PC-3 (cell line): ENCODE measurements at regions of chr15 and their contacts with region 1.

Region 1: DNA sequence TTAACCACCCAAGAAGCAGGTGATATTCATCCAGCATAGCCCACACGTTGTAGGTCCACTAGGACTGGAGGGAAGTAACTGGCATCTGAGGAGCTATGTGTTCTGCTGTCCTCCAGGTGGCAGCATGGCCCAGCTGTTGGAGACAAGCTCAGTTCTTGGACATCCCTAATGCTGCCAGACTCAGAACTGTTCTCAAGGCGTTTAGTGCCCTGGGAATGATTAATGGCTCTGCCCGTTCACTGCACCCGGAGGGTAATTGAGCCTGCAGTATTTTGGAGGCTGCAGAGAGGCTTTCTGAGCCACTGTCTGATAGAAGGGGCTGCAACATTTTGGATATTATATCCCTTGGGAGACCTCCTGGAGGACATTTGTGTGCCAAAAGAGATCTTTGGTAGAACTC is 521.2 kb upstream of the SEMA6D start:
- DNase-seq: peak; percentile 80
- ATAC-seq: peak; percentile 97
- H3K4me3 ChIP-seq: no peak overlapping the region
- H3K27ac ChIP-seq: no peak overlapping the region
- H3K4me1 ChIP-seq: no peaks in the 10 kb centered on the region
- H3K27me3 ChIP-seq: no peaks in the 10 kb centered on the region
- CTCF ChIP-seq: peak; percentile 73

Region 2: GRCh38 chr15:47266546-47266945 is 70.5 kb after region 1 on chr15:
- CTCF ChIA-PET with region 1: no interaction called
- POLR2A ChIA-PET with region 1: no interaction called
- intact Hi-C with region 1: no loop called
- DNase-seq: no peak
- ATAC-seq: no peak
- H3K4me3 ChIP-seq: no peak overlapping the region
- H3K27ac ChIP-seq: no peak overlapping the region
- H3K4me1 ChIP-seq: no peaks in the 10 kb centered on the region
- H3K27me3 ChIP-seq: no peaks in the 10 kb centered on the region
- CTCF ChIP-seq: no peak

Region 3: DNA sequence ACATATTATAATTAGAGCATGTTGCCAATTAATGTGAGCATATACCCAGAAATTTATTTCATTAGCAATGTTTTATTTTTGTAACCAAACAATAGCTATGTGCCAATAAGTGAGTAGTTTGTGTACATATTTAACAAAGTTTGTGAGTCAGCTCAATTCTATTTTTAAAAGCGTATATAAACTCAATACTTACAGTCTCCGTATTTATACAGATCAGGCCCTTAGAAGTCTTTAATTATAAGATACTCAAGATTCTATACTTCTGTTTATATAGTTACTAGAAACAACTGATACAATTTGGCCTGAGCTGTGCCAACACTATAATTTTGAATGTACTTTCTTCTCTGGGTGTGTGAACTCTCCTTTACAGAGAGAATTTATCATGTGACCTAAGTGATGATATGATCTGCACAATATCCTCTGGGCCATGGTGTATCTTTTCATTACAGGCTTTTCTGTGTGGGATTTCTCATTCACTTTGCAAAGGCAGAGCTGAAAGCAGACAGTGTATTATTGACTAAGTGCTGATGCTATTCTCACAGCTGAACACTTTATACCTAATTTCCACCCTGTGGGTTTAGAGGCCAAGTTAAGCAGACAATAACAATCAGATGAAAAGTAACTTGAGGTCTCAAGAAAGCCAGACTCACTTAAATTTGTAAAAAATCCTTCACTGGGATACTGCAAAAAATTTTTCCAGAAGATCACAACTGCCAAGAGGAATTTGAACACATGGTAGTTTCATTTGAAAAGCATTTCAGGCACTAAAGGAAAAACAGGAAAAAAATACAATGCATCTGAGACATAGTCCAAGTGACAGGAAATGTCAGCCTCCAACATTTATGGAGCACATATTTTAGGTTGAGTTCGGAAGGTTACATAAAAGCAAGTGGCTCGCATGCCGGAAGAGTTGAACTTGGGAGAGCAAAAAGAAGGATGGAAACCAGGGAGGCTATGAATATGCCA is 243.4 kb after region 1 on chr15:
- CTCF ChIA-PET with region 1: no interaction called
- POLR2A ChIA-PET with region 1: no interaction called
- intact Hi-C with region 1: loop called (anchors 5 kb)
- DNase-seq: peak; percentile 70
- ATAC-seq: peak; percentile 73
- H3K4me3 ChIP-seq: peak overlapping the region; percentile 29; the same call in 1 of the 2 replicates
- H3K27ac ChIP-seq: peak overlapping the region; percentile 90
- H3K4me1 ChIP-seq: peaks cover 51% of the 10 kb centered on the region
- H3K27me3 ChIP-seq: no peaks in the 10 kb centered on the region
- CTCF ChIP-seq: no peak

Region 4: DNA sequence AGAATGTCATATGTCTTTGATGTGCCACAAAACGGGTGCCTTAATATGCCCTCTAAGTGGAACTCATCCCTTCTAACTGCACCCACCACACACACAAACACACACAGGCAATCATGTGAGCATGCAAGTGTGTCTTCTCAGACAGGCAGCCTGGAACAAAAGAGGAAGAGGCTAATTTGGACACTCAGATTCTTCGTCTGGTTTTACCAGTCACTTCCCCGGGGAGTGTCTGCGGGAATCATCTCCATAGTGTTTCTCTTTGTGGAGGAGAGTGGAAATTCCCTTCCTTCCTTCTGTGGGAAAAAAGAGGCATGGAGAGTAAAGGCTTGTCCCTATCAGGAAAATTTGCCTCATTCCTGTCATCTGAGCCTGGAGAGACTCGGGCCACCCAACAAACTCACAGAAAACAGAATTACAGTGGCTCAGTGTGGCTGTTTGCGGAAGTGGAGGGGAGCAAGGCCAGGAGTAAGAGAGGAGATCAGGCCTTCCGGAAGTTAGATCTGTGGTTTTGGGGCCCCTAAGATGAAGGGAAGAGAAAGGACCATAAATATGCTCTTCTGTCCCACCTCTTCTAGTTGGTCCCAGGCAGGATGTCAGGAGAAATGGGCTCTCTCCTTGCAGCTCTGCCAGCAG is 308.7 kb after region 1 on chr15:
- CTCF ChIA-PET with region 1: interaction called, 7 read pairs
- POLR2A ChIA-PET with region 1: no interaction called
- intact Hi-C with region 1: loop called (anchors 1 kb)
- DNase-seq: no peak
- ATAC-seq: no peak
- H3K4me3 ChIP-seq: no peak overlapping the region
- H3K27ac ChIP-seq: no peak overlapping the region
- H3K4me1 ChIP-seq: no peaks in the 10 kb centered on the region
- H3K27me3 ChIP-seq: no peaks in the 10 kb centered on the region
- CTCF ChIP-seq: no peak

Region 5: GRCh38 chr15:47987908-47988532 is 792.0 kb after region 1 on chr15:
- CTCF ChIA-PET with region 1: interaction called, 29 read pairs
- POLR2A ChIA-PET with region 1: no interaction called
- intact Hi-C with region 1: loop called (anchors 1 kb)
- DNase-seq: peak; percentile 60
- ATAC-seq: peak; percentile 90
- H3K4me3 ChIP-seq: no peak overlapping the region
- H3K27ac ChIP-seq: no peak overlapping the region
- H3K4me1 ChIP-seq: no peaks in the 10 kb centered on the region
- H3K27me3 ChIP-seq: no peaks in the 10 kb centered on the region
- CTCF ChIP-seq: peak; percentile 70

Region 6: DNA sequence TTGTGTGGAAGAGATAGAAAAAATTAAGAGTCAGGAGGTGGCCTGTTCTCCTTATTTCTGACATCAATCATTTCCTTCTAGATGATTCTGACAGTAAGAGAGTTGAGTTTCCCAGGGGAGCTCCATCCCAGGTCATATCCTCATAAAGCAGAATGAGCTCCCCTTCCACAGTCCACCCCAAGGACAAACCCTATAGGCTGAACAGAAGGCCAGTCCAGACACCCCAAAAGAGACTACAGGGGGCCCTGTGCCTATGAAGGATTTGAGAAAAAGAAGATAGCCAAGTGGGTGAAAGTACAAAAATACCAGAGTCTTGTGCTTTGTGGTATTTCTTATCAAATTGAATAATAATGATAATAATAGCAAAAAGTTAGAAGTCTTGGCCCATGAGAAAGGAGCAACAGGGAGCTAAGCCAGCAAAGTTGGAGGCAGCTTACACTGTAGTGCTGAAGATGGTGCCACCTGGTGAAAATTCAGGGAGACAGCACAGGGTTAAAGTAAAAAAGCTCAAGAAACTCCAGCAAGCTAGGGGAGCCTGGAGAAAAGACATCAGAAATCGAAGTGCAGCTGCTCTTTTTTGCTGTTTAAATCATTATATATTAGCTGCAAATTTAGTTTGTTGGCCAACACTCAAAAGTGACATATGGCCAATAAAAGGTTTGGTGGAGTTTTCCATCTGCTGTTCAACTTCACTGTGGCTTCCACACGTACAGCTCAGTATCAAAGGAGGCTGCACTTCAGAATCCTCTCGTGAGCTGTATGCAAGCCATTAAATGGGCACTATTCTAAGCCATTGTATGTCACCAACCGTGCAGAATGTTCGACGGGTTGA is 888.9 kb after region 1 on chr15:
- CTCF ChIA-PET with region 1: interaction called, 11 read pairs
- POLR2A ChIA-PET with region 1: no interaction called
- intact Hi-C with region 1: loop called (anchors 2 kb)
- DNase-seq: peak; percentile 37
- ATAC-seq: peak; percentile 63
- H3K4me3 ChIP-seq: no peak overlapping the region
- H3K27ac ChIP-seq: no peak overlapping the region
- H3K4me1 ChIP-seq: no peaks in the 10 kb centered on the region
- H3K27me3 ChIP-seq: peaks cover 17% of the 10 kb centered on the region
- CTCF ChIP-seq: peak; percentile 60

Region 7: GRCh38 chr15:48250640-48251076 is 1054.6 kb after region 1 on chr15:
- CTCF ChIA-PET with region 1: no interaction called
- POLR2A ChIA-PET with region 1: no interaction called
- intact Hi-C with region 1: loop called (anchors 1 kb)
- DNase-seq: peak; percentile 60
- ATAC-seq: no peak; the same call in 1 of the 2 replicates
- H3K4me3 ChIP-seq: no peak overlapping the region
- H3K27ac ChIP-seq: no peak overlapping the region
- H3K4me1 ChIP-seq: no peaks in the 10 kb centered on the region
- H3K27me3 ChIP-seq: no peaks in the 10 kb centered on the region
- CTCF ChIP-seq: peak; percentile 66

Region 8: GRCh38 chr15:48285329-48286214 is 1089.5 kb after region 1 on chr15:
- CTCF ChIA-PET with region 1: interaction called, 5 read pairs
- POLR2A ChIA-PET with region 1: no interaction called
- intact Hi-C with region 1: loop called (anchors 5 kb)
- DNase-seq: peak; percentile 89
- ATAC-seq: peak; percentile 89
- H3K4me3 ChIP-seq: peak overlapping the region; percentile 51; the same call in 1 of the 2 replicates
- H3K27ac ChIP-seq: no peak overlapping the region
- H3K4me1 ChIP-seq: peaks cover 7% of the 10 kb centered on the region
- H3K27me3 ChIP-seq: peaks cover 4% of the 10 kb centered on the region; the same call in 1 of the 2 replicates
- CTCF ChIP-seq: peak; percentile 76